Activated CD4-positive, alpha-beta T cell treated with anti-CD3 and anti-CD28 coated beads, Interleukin-2, amount 10 ng/mL, durations not matched to agents 24 days and 14 days (primary cell): ENCODE measurements at regions of chr13 and their contacts with region 1.

Region 1: DNA sequence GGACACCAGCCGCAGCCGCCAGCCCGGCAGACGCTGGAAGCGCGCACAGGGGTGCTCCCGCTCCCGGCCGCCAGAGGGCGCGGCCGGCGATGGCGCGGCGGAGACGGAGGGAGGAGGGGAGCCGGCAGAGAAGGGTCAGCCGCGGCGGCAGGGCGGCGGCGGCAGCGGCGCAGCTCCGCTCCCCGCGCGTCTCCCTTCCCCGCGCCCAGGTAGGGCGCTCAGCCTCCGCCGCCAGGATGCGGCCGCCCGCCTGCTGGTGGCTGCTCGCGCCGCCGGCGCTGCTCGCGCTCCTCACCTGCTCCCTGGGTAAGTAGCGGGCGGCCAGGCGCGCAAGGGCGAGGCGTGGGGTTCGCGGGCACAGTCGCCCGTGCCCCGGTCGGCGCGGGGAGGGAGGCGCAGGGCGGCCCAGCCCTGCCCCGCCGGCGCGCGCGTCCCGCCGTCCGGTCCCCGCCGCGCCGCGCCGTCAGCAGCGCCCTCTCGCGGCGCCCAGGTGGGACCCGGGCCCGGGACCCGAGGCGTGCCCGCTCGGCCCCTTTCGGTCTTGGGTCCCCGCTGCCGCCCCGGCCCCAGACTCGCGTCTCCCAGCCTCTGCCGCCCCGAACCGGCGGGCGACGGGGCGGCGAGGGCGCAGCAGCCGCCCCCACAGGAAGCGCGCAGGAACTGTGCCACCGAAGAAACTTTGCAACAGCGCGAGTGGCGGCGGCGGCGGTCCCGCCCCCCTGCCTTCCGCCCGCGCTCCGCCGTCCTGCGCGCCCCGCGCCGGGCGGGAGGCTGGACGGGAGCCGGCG is at the start of gene B3GLCT:
- DNase-seq: peak; percentile 95
- H3K4me3 Mint-ChIP-seq: peak within 1 kb of the TSS; percentile 81
- H3K27ac Mint-ChIP-seq: peak within 1 kb of the TSS; percentile 73
- H3K4me1 Mint-ChIP-seq: peaks cover 26% of the 10 kb centered on the region
- H3K27me3 Mint-ChIP-seq: peaks cover 16% of the 10 kb centered on the region
- total RNA-seq, gene B3GLCT: 4.0 and 4.4 TPM in 2 replicates

Region 2: GRCh38 chr13:29595380-29596063 is 1604.5 kb before region 1 on chr13 and contains the start of gene SLC7A1:
- intact Hi-C with region 1: loop called (anchors 10 kb)
- DNase-seq: peak; percentile 97
- H3K4me3 Mint-ChIP-seq: peak within 1 kb of the TSS; percentile 95
- H3K27ac Mint-ChIP-seq: peak within 1 kb of the TSS; percentile 97
- H3K4me1 Mint-ChIP-seq: peaks cover 38% of the 10 kb centered on the region
- H3K27me3 Mint-ChIP-seq: peaks cover 5% of the 10 kb centered on the region
- total RNA-seq, gene SLC7A1: 137 and 138 TPM in 2 replicates

Region 3: GRCh38 chr13:31073859-31074718 is 126.0 kb before region 1 on chr13:
- intact Hi-C with region 1: no loop called
- DNase-seq: peak; percentile 77
- H3K4me3 Mint-ChIP-seq: no peak overlapping the region
- H3K27ac Mint-ChIP-seq: no peak overlapping the region
- H3K4me1 Mint-ChIP-seq: peaks cover 3% of the 10 kb centered on the region
- H3K27me3 Mint-ChIP-seq: no peaks in the 10 kb centered on the region

Region 4: DNA sequence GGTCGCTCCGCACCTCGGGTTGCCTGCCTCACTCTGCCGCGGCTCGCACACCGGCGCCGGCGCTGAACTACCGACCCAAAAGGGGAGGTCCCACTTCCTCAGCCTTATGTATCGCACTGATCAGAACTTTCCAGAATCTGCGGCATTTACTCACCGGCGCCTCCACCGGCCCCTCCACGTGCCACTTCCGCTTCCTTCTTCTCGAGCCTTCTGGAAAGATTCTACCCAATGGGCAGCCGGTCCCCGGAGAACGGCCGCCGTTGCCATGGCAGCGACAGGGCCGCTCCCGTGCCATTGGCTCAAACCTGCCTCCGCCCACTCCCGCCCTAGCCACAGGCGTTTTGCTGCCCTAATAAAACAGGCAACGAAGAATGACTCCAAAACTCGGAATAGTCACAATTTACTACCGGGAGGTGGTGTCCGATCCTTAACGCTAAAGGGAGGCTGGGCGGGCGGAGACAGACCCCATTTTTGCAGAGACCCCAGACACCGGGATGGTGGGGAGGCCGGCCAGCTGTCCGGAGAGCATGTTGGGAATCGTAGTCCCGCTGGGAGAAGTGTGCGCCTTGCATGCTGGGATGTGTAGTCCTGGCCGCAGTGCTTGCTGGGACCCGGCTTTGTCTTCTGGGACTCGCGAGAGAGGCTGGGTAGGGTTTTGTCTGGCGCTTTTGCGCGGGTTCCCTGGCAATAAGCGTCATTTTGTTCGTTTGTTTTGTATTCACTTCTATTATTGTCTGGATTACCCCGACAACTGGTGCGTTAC is 38.0 kb before region 1 on chr13 and contains the start of gene HSPH1:
- intact Hi-C with region 1: loop called (anchors 1 kb)
- DNase-seq: peak; percentile 100
- H3K4me3 Mint-ChIP-seq: peak within 1 kb of the TSS; percentile 99
- H3K27ac Mint-ChIP-seq: peak within 1 kb of the TSS; percentile 99
- H3K4me1 Mint-ChIP-seq: peaks cover 45% of the 10 kb centered on the region
- H3K27me3 Mint-ChIP-seq: peaks cover 2% of the 10 kb centered on the region
- total RNA-seq, gene HSPH1: 381 and 385 TPM in 2 replicates

Region 5: GRCh38 chr13:31236211-31236786 is 36.3 kb after region 1 on chr13:
- intact Hi-C with region 1: no loop called
- DNase-seq: no peak
- H3K4me3 Mint-ChIP-seq: no peak overlapping the region
- H3K27ac Mint-ChIP-seq: no peak overlapping the region
- H3K4me1 Mint-ChIP-seq: no peaks in the 10 kb centered on the region
- H3K27me3 Mint-ChIP-seq: no peaks in the 10 kb centered on the region

Region 6: GRCh38 chr13:31424117-31424729 is 224.2 kb after region 1 on chr13:
- intact Hi-C with region 1: loop called (anchors 1 kb)
- DNase-seq: peak; percentile 84
- H3K4me3 Mint-ChIP-seq: no peak overlapping the region
- H3K27ac Mint-ChIP-seq: no peak overlapping the region
- H3K4me1 Mint-ChIP-seq: peaks cover 3% of the 10 kb centered on the region
- H3K27me3 Mint-ChIP-seq: no peaks in the 10 kb centered on the region